ENCODE measurements at regions of chr19 and their contacts with region 1.

Region 1: GRCh38 chr19:34733826-34734600 is at the start of gene ZNF181:
- DNase-seq: peak; percentile 93 to 94
- ATAC-seq: peak; percentile 97
- H3K4me3 ChIP-seq: peak within 1 kb of the TSS; percentile 85 to 95
- H3K27ac ChIP-seq: peak within 1 kb of the TSS; percentile 95 to 98
- H3K4me1 ChIP-seq: peaks cover 0 to 6% of the 10 kb centered on the region in 2 donors
- H3K27me3 ChIP-seq: no peaks in the 10 kb centered on the region
- total RNA-seq, gene ZNF181: 10.7 to 12.7 TPM

Region 2: GRCh38 chr19:34677386-34678084 is 56.5 kb before region 1 on chr19 and contains the start of gene ZNF302:
- intact Hi-C with region 1: loop called (anchors 2 to 5 kb)
- DNase-seq: peak; percentile 98 to 99
- ATAC-seq: peak; percentile 98
- H3K4me3 ChIP-seq: peak within 1 kb of the TSS; percentile 24 to 76
- H3K27ac ChIP-seq: peak within 1 kb of the TSS; percentile 78 to 93
- H3K4me1 ChIP-seq: peaks cover 0 to 3% of the 10 kb centered on the region in 2 donors
- H3K27me3 ChIP-seq: no peaks in the 10 kb centered on the region
- total RNA-seq, gene ZNF302: 20.5 to 37.3 TPM

Region 3: GRCh38 chr19:34772697-34773554 is 38.9 kb after region 1 on chr19 and contains the start of gene ZNF599:
- intact Hi-C with region 1: loop called (anchors 5 kb)
- DNase-seq: peak; percentile 95 to 98
- ATAC-seq: peak; percentile 99
- H3K4me3 ChIP-seq: peak within 1 kb of the TSS; percentile 61 to 77
- H3K27ac ChIP-seq: peak within 1 kb of the TSS in 1 of 2 donors; percentile 11
- H3K4me1 ChIP-seq: no peaks in the 10 kb centered on the region
- H3K27me3 ChIP-seq: no peaks in the 10 kb centered on the region
- total RNA-seq, gene ZNF599: 4.4 to 7.8 TPM